CD8-positive, alpha-beta T cell (primary cell): ENCODE measurements at regions of chr13 and their contacts with region 1.

Region 1: DNA sequence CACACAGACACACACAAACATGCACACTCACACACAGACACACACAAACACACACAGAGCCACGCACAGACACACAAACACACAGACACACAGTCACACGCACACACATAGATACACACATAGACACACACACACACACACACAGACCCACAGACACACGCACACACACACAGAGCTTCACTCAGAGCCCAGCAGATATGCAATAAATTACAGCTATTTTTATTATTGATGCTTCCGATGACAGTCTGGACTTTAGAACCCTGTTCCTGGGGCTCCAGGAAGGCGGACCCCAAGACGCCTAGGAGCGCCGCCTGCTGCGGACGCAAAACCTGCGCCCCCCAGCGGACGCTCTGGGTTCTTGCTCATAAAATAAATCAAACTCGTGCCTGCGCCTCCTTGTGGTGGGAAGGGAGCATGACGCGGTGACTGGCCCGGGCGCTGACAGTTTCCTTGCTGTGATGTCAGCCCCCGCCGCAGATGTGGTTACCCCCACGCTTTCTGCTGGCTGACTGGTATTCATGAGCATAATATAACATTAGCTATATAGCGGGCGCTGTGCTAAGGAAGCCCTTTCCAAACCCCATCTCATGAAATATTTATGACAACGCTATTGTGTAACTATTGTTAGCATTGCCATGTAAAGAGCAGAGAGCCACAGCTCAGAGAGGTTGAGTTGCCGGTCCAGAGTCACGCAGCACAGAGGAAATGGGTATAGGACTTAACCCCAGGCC is 64.4 kb upstream of the TM9SF2 start:
- DNase-seq: peak; percentile 92 to 98 (median 95)
- ATAC-seq: peak; percentile 50
- H3K4me3 ChIP-seq: no peak overlapping the region
- H3K4me3 Mint-ChIP-seq: peak overlapping the region; percentile 63
- H3K27ac ChIP-seq: peak overlapping the region; percentile 27 to 33
- H3K27ac Mint-ChIP-seq: peak overlapping the region; percentile 55
- H3K4me1 ChIP-seq: peaks cover 57% of the 10 kb centered on the region
- H3K4me1 Mint-ChIP-seq: peaks cover 52% of the 10 kb centered on the region
- H3K27me3 ChIP-seq: no peaks in the 10 kb centered on the region
- H3K27me3 Mint-ChIP-seq: no peaks in the 10 kb centered on the region
- CTCF ChIP-seq: peak; percentile 99

Region 2: GRCh38 chr13:98813993-98814392 is 622.9 kb before region 1 on chr13:
- CTCF ChIA-PET with region 1: no interaction called
- POLR2A ChIA-PET with region 1: no interaction called
- intact Hi-C with region 1: no loop called
- DNase-seq: no peak
- ATAC-seq: no peak
- H3K4me3 ChIP-seq: no peak overlapping the region
- H3K4me3 Mint-ChIP-seq: no peak overlapping the region
- H3K27ac ChIP-seq: no peak overlapping the region
- H3K27ac Mint-ChIP-seq: no peak overlapping the region
- H3K4me1 ChIP-seq: no peaks in the 10 kb centered on the region
- H3K4me1 Mint-ChIP-seq: no peaks in the 10 kb centered on the region
- H3K27me3 ChIP-seq: no peaks in the 10 kb centered on the region
- H3K27me3 Mint-ChIP-seq: no peaks in the 10 kb centered on the region
- CTCF ChIP-seq: no peak

Region 3: DNA sequence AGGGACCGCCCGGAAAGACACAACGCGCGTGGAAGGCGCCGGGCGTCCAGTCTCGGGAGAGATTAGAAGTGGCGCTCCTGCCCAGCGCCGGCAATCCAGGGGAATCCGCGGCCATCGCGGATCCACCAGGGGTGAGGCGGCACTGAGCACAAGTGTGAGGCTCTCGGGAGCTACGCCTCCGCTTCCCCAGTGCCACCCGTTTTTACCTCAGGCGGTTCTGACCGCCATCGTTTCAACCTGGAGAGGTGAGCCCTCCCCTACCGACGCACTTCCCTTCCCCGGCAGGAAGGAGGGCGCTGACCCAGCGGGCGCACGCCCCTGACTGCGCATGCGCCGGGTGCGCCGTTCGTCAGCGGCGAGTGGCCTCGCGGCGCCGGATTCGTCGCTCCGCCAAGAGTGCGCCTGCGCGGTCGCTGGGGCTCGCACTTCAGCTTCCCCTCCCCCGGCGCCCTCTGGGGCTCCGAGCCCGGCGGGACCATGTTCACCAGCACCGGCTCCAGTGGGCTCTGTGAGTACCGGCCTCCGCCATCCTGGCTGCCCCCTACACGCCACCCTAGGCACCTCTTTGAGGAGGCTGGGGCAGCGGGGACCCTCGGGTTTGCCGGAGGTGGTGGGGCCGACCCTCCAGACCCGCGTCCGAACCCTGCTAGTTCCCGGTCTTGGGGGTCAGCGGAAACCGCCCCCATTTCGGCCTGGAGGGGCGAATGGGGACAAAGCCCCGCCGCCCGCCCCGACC is 236.3 kb before region 1 on chr13 and contains the start of gene UBAC2:
- CTCF ChIA-PET with region 1: interaction called, 14 read pairs
- POLR2A ChIA-PET with region 1: no interaction called
- intact Hi-C with region 1: loop called (anchors 5 kb)
- DNase-seq: peak; percentile 93 to 99 (median 97)
- ATAC-seq: peak; percentile 77
- H3K4me3 ChIP-seq: peak within 1 kb of the TSS; percentile 77 to 90
- H3K4me3 Mint-ChIP-seq: peak within 1 kb of the TSS; percentile 90
- H3K27ac ChIP-seq: peak within 1 kb of the TSS; percentile 98 to 99
- H3K27ac Mint-ChIP-seq: peak within 1 kb of the TSS; percentile 94
- H3K4me1 ChIP-seq: peaks cover 53% of the 10 kb centered on the region
- H3K4me1 Mint-ChIP-seq: peaks cover 69% of the 10 kb centered on the region
- H3K27me3 ChIP-seq: no peaks in the 10 kb centered on the region
- H3K27me3 Mint-ChIP-seq: no peaks in the 10 kb centered on the region
- CTCF ChIP-seq: no peak
- total RNA-seq, gene UBAC2: 62.0 to 63.0 TPM

Region 4: DNA sequence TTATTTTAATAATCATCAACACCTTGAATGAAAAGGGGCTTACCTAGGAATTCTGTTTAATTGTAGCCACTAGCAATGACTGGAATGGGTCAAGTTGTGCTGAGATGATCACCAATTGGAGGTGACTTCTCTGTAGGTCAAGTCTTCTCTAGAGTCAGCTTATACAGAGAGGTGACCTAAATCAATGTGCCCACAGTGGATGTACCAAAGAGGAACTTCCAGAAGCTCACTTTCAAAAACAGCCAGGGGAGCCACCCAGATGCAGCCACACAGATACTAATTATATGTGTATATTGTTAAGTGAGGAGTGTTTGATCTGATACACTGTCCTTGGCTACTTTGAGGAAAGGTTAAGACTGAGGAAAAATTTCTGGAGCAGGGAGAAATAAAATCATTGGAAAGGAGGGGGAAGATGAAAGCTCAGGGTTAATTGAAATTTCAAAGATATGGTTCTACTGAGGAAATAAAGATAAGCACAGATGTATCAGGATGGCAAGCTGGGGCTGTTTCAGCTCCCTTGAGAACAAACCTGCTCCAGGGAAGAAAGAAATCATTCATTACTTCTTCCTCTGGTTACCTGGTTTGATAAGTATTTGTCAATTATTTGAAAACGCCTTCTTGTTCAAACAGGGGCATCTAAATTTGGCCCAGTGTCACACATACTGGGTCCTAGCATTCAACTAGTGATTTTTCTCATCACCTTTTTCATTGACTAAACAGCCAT is 134.8 kb before region 1 on chr13:
- CTCF ChIA-PET with region 1: interaction called, 17 read pairs
- POLR2A ChIA-PET with region 1: interaction called, 8 read pairs
- intact Hi-C with region 1: no loop called
- DNase-seq: no peak
- ATAC-seq: no peak
- H3K4me3 ChIP-seq: peak overlapping the region in 1 of 2 experiments; percentile 2
- H3K4me3 Mint-ChIP-seq: peak overlapping the region; percentile 81
- H3K27ac ChIP-seq: peak overlapping the region in 1 of 2 experiments; percentile 44
- H3K27ac Mint-ChIP-seq: peak overlapping the region; percentile 91
- H3K4me1 ChIP-seq: peaks cover 77% of the 10 kb centered on the region
- H3K4me1 Mint-ChIP-seq: peaks cover 85% of the 10 kb centered on the region
- H3K27me3 ChIP-seq: no peaks in the 10 kb centered on the region
- H3K27me3 Mint-ChIP-seq: no peaks in the 10 kb centered on the region
- CTCF ChIP-seq: no peak

Region 5: DNA sequence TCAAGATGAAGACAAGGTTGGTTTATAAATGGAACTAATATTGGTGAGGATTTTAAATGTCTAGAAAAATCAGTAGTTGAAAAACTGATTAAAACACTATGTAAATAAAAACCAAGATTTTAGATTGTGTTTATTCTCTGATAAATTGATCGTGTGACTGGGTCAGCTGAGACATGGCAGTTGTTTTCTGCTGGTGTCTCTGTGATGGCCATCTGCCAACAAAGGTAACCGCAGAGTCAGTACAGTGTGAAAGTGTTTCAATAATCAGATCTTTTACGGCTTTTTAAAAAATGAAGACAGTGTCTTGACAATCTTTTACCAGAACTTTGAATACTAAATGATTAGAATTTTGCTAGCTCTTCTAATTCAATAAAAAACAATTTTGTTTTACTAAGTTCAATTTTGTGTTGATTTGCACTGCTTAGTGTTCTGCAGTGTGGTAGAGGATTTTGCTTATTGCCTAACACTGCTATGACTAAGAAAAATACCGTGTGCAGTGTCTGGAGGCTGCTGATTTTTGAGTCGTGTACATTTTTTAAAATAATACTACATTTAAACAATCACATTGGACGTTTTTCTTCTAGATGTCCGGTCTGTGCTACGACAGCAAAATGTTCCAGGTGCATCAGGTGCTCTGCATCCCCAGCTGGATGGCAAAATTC is 97.0 kb before region 1 on chr13:
- CTCF ChIA-PET with region 1: interaction called, 15 read pairs
- POLR2A ChIA-PET with region 1: no interaction called
- intact Hi-C with region 1: no loop called
- DNase-seq: peak in 6 of 9 experiments; percentile 55 to 85 (median 70)
- ATAC-seq: peak; percentile 72
- H3K4me3 ChIP-seq: peak overlapping the region in 1 of 2 experiments; percentile 14
- H3K4me3 Mint-ChIP-seq: peak overlapping the region; percentile 63
- H3K27ac ChIP-seq: peak overlapping the region; percentile 16 to 26
- H3K27ac Mint-ChIP-seq: peak overlapping the region; percentile 85
- H3K4me1 ChIP-seq: peaks cover 37% of the 10 kb centered on the region
- H3K4me1 Mint-ChIP-seq: peaks cover 77% of the 10 kb centered on the region
- H3K27me3 ChIP-seq: no peaks in the 10 kb centered on the region
- H3K27me3 Mint-ChIP-seq: no peaks in the 10 kb centered on the region
- CTCF ChIP-seq: no peak

Region 6: GRCh38 chr13:99380921-99381645 is 55.8 kb before region 1 on chr13:
- CTCF ChIA-PET with region 1: interaction called, 306 read pairs
- POLR2A ChIA-PET with region 1: interaction called, 12 read pairs
- intact Hi-C with region 1: no loop called
- DNase-seq: peak in 7 of 9 experiments; percentile 41 to 84 (median 75)
- ATAC-seq: peak; percentile 50
- H3K4me3 ChIP-seq: no peak overlapping the region
- H3K4me3 Mint-ChIP-seq: peak overlapping the region; percentile 53
- H3K27ac ChIP-seq: peak overlapping the region; percentile 42 to 72
- H3K27ac Mint-ChIP-seq: peak overlapping the region; percentile 98
- H3K4me1 ChIP-seq: peaks cover 79% of the 10 kb centered on the region
- H3K4me1 Mint-ChIP-seq: peaks cover 93% of the 10 kb centered on the region
- H3K27me3 ChIP-seq: no peaks in the 10 kb centered on the region
- H3K27me3 Mint-ChIP-seq: no peaks in the 10 kb centered on the region
- CTCF ChIP-seq: no peak

Region 7: DNA sequence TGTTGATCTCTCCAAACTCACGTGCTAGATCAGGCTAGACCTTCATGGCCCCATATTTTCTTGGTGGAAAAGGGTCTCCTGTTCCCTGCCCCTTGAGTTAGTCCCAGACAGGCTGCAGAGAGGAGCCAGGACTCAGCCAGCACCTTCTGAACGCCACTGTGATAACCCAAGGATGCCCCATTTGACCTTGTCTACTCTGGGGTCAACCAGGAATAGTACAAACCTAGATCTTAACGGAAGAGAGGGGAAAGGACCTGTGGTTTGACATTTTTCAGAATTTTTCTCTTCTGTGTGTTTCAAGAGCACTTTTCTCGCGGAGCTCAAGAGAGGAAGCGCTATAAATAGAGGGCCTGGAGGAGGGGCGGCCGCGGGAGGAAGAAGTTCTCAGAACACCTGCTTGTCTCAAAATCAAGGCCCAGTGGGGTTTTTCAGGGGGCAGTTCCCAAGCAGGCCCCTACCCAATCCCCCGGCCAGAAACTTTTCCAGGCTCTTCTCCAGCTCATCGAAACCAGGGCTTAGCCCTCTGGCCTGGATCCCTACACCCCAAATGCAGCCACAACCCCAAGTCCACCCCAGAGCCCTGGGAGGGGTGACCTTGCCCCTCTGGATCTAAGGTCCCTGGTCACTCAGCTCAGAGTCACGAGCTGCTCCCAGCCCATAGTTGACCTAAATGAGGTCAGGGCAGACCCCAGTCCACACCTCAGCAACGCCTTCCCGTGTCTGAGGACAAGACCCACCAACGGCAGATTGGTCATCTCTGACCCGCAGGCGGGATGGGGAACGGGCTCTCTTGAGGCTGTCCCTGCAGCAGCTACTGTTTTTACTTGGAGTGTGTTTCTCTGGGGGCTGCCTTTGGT is 11.1 kb before region 1 on chr13:
- CTCF ChIA-PET with region 1: interaction called, 117 read pairs
- POLR2A ChIA-PET with region 1: interaction called, 9 read pairs
- intact Hi-C with region 1: loop called (anchors 1 kb)
- DNase-seq: peak in 8 of 9 experiments; percentile 37 to 71 (median 60)
- ATAC-seq: peak; percentile 56
- H3K4me3 ChIP-seq: peak overlapping the region in 1 of 2 experiments; percentile 28
- H3K4me3 Mint-ChIP-seq: peak overlapping the region; percentile 63
- H3K27ac ChIP-seq: peak overlapping the region; percentile 49 to 73
- H3K27ac Mint-ChIP-seq: peak overlapping the region; percentile 97
- H3K4me1 ChIP-seq: peaks cover 68% of the 10 kb centered on the region
- H3K4me1 Mint-ChIP-seq: peaks cover 60% of the 10 kb centered on the region
- H3K27me3 ChIP-seq: no peaks in the 10 kb centered on the region
- H3K27me3 Mint-ChIP-seq: no peaks in the 10 kb centered on the region
- CTCF ChIP-seq: no peak